ENCODE measurements at regions of chr9 and their contacts with region 1.

Region 1: DNA sequence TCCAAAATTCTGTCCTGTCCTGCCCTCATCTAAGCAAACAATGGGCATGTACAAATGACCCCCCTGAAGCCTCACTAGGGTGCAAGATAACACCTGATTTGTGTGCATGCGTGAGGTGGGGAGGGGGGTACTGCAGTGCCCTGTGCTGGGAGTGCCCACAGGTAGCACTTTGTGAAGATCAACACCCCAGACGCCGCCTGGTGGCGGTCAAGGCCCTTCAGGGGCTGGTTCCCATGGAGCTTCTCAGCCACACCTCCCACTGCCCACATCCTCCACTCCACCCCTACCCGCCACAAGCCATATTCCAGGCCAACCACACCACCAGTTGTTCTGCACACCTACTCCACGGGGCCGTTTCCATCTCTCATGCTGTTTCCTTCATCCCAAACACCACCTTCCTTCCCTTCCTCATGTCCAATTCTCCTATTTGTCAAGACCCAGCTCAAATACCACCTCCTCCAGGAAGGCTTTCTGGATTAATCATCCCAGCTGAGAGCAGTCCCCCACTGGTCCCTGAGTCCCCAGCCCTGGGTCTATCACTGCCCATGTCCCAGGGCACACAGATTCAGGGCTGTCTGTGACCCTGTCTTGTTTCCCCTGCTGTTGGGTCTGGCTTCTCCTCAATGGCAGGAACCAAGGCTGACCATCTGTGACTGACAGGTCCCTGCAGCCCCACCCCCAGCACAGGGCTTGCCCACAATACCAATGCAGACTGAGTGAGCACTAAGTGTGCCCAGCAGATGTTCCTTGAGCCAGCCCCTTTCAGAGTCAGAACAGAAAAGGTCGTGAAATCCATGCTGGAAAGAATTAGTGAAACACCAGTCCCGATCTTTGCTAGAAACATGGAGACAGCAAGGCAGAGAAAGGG is 178.4 kb downstream of the PAX5 start:
- DNase-seq: peak in 1 of 2 experiments; percentile 76
- H3K4me3 ChIP-seq: no peak overlapping the region
- H3K27ac ChIP-seq: no peak overlapping the region
- H3K4me1 ChIP-seq: peaks cover 0 to 7% (median 1%) of the 10 kb centered on the region in 4 experiments; a peak in 4 of 7 replicates
- H3K27me3 ChIP-seq: no peaks in the 10 kb centered on the region
- CTCF ChIP-seq: peak; percentile 75
- EP300 ChIP-seq: no peak
- POLR2A ChIP-seq: no peak
- RAD21 ChIP-seq: peak; percentile 60 to 68

Region 2: DNA sequence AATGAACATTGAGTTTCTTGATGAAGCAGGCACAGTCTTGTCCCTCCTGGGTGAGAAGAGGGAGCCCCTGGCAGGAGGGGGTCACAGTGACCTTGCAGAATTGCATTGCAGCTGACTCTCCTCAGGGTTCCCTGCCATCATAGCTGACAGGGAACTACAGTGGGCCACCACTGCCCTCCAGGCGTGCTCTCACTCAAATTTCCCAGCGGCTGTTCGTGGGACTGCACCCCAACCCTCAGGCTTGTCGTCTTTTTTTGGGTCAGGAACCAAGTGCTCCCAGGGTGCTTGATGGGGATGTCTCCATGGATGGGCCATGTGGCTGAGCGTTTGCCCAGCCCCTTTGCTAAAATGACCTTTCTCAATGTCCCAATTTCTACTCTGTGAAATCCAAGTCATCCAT is 67.1 kb before region 1 on chr9:
- CTCF ChIA-PET with region 1: interaction called, 148 read pairs
- POLR2A ChIA-PET with region 1: no interaction called
- DNase-seq: peak in 1 of 2 experiments; percentile 78
- H3K4me3 ChIP-seq: no peak overlapping the region
- H3K27ac ChIP-seq: no peak overlapping the region
- H3K4me1 ChIP-seq: no peaks in the 10 kb centered on the region
- H3K27me3 ChIP-seq: no peaks in the 10 kb centered on the region; a peak in 1 of 7 replicates
- CTCF ChIP-seq: peak; percentile 53 to 67 (median 55)
- EP300 ChIP-seq: no peak
- POLR2A ChIP-seq: no peak
- RAD21 ChIP-seq: peak; percentile 28 to 47; a peak in 3 of 4 replicates

Region 3: DNA sequence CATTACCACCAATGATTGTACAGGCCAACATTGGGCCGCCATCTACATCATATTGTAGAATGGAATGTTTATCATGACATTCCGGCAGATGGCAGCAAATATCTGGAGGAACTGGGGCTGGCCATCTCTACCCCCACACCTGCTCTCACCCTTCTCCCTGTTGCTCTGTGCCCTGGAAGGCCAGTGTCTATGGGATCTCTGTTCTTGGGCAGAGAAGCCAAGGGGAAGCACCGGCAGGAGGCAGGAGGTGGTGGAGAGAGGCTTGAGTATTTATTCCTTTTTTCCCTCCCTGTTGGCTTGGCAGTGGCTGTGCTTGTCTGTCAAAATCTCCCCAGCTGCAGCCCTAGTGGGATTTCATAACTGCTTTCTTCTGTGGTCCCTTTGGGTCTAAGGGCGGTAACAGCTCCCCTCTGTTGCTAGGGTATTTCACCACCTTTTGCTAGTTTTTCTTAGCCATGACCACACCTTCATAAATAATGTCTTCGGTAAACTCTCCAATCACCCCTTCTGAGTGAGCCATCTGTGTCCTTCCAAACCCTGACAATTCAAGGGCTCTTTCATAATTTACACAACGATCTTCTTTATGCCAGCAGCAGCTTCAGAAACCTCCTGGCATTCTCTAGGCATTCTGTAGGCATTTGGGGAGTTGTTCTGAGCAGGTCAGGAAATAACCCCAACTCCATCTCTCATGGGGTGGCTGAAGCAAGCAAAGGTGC is 57.2 kb before region 1 on chr9:
- CTCF ChIA-PET with region 1: interaction called, 148 read pairs
- POLR2A ChIA-PET with region 1: no interaction called
- DNase-seq: no peak
- H3K4me3 ChIP-seq: no peak overlapping the region
- H3K27ac ChIP-seq: no peak overlapping the region
- H3K4me1 ChIP-seq: peaks cover 0 to 5% (median 0%) of the 10 kb centered on the region in 4 experiments; a peak in 2 of 7 replicates
- H3K27me3 ChIP-seq: no peaks in the 10 kb centered on the region
- CTCF ChIP-seq: peak in 2 of 3 experiments; percentile 44 to 59; a peak in 3 of 4 replicates
- EP300 ChIP-seq: no peak
- POLR2A ChIP-seq: no peak
- RAD21 ChIP-seq: peak; percentile 69 to 79

Region 4: GRCh38 chr9:36818965-36819870 is 36.5 kb before region 1 on chr9:
- CTCF ChIA-PET with region 1: interaction called, 14 read pairs
- POLR2A ChIA-PET with region 1: no interaction called
- DNase-seq: peak in 1 of 2 experiments; percentile 56
- H3K4me3 ChIP-seq: peak overlapping the region; percentile 30 to 61 (median 40); a peak in 7 of 8 replicates
- H3K27ac ChIP-seq: no peak overlapping the region
- H3K4me1 ChIP-seq: peaks cover 0 to 18% (median 11%) of the 10 kb centered on the region in 4 experiments; a peak in 5 of 7 replicates
- H3K27me3 ChIP-seq: peaks cover 0 to 23% (median 21%) of the 10 kb centered on the region in 4 experiments; a peak in 6 of 7 replicates
- CTCF ChIP-seq: no peak
- EP300 ChIP-seq: no peak
- POLR2A ChIP-seq: no peak
- RAD21 ChIP-seq: no peak

Region 5: DNA sequence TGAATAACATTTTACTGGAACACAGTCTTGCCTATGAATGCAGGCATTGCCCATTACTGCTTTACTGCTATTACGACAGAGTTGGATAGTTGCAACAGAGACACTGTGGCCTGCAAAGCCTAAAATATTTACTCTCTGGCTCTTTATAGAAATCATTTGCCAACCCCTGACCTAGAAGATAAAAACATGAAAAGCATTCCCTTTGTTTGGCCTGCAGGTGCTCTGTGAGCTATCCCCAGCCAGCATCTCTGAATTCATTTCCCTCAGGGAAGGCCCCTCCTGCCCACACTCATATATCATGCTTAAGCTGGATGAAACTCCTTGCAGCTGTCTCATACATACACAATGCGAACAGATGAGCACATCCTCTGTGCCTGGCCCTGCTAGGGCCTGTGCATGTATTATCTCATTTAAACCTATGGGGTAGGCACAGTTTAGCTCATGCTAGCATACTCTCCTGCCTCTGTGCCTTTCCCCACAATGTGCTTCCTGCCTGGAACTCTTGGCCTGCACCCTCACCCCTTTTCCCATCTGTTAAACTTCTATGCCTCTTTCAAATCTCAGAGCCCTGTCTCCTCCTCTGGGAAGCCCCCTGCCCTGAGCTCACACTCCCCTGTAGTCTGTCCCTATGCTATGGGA is 14.7 kb before region 1 on chr9:
- CTCF ChIA-PET with region 1: interaction called, 69 read pairs
- POLR2A ChIA-PET with region 1: interaction called, 3 read pairs
- DNase-seq: no peak
- H3K4me3 ChIP-seq: no peak overlapping the region
- H3K27ac ChIP-seq: no peak overlapping the region
- H3K4me1 ChIP-seq: peaks cover 2 to 21% (median 12%) of the 10 kb centered on the region in 4 experiments
- H3K27me3 ChIP-seq: no peaks in the 10 kb centered on the region; a peak in 1 of 7 replicates
- CTCF ChIP-seq: no peak
- EP300 ChIP-seq: no peak
- POLR2A ChIP-seq: no peak
- RAD21 ChIP-seq: no peak

Measured in H1 (cell line).